Endothelial cell of umbilical vein (primary cell): ENCODE measurements at regions of chr4 and their contacts with region 1.

Region 1: GRCh38 chr4:26410385-26411293 is 79.6 kb downstream of the CCKAR start:
- DNase-seq: peak; percentile 67
- H3K4me3 ChIP-seq: no peak overlapping the region
- H3K27ac ChIP-seq: no peak overlapping the region
- H3K4me1 ChIP-seq: no peaks in the 10 kb centered on the region
- H3K27me3 ChIP-seq: no peaks in the 10 kb centered on the region
- CTCF ChIP-seq: peak; percentile 31 to 42
- POLR2A ChIP-seq: no peak

Region 2: DNA sequence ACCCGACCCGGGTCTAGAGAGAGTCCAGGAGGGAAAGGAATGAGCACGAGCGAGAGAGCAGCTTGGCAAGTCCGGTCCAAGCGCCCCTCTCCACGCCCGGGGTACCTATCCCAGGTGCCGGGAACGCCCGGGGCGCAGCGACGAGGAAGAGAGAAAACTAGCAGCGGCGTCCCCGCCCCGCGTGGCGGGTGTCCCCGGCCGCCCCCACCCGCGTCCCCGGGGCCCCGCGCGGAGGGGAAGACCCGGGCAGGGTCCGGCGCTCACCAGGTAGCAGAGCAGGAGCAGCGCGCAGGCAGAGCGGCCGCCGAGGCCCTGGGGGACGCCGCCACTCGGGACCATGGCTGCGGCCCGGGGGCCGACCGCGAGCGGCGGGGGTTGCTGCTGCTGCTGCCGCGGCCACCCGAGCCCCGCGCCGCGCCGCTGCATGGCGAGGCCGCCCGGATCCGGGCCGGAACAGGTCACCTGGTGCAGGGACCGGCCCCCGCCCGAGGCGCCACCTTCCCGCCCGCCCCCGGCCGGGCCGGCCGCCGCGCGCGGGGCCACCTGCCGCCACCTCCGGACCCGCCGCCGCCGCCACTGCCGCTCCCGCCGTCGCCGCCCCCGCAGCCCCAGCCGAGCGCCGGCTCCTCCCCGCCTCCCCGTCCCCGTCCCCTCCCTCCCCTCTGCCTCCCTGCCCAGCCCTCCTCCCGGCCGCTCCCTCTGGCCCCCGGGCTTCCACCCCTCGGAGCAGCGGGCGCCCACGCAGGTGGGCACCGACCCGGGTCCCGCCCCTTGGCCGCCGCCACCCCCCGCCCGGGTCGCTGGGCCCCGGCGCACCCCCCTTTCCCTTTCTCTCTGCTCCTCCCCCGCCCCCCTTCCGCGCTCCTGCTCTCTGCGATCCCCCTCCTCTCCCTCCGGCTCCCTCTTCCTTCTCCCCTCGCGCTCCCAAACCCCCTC is 548.0 kb before region 1 on chr4 and contains the start of gene SEL1L3:
- CTCF ChIA-PET with region 1: no interaction called
- POLR2A ChIA-PET with region 1: no interaction called
- dilution Hi-C with region 1: no loop called
- intact Hi-C with region 1: loop called (anchors 10 kb)
- DNase-seq: no peak
- H3K4me3 ChIP-seq: peak within 1 kb of the TSS; percentile 52 to 92 (median 80)
- H3K27ac ChIP-seq: peak within 1 kb of the TSS; percentile 74
- H3K4me1 ChIP-seq: peaks cover 38% of the 10 kb centered on the region
- H3K27me3 ChIP-seq: no peaks in the 10 kb centered on the region
- CTCF ChIP-seq: no peak
- POLR2A ChIP-seq: no peak
- total RNA-seq, gene SEL1L3: 91.1 and 122 TPM in 2 replicates

Region 3: DNA sequence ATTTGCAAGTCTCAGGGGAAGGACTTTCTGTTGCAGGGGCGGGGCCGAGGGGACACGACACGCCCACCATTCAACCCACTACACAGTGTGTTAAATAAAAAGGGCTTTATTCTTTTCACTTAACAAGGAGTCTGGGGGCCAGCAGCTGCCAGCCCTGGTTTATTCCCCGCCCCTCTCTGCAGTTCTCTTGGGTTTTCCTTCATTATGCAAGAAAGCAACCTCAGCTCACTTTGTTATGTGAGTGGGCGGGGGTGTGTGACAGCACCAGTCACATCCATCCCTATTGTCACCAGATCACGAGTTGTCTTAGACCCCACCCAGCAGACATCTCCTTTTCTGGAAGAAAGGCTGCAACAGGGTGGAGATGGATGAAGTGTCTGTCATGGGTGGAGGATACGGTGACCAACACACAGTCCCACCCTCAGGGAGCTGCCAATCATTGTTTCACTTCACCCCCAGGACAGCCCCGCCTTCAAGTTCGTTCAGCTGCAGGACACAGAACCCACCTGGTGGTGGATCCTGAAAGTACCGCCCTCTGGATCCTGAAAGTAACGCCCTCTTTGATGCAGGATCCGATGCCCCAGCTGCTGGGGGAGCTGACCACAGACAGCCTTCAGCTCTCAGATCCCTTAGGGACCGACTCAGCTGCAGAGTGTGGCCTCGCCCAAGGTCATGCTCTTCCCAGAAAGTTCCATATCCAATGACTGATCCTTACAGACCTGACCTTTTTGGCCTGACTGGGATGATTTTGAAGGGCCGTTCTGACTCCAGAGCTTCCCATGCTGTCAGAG is 417.0 kb before region 1 on chr4:
- CTCF ChIA-PET with region 1: interaction called, 40 read pairs
- POLR2A ChIA-PET with region 1: no interaction called
- dilution Hi-C with region 1: no loop called
- intact Hi-C with region 1: loop called (anchors 1 kb)
- DNase-seq: no peak
- H3K4me3 ChIP-seq: no peak overlapping the region
- H3K27ac ChIP-seq: no peak overlapping the region
- H3K4me1 ChIP-seq: no peaks in the 10 kb centered on the region
- H3K27me3 ChIP-seq: no peaks in the 10 kb centered on the region
- CTCF ChIP-seq: peak; percentile 12 to 23
- POLR2A ChIP-seq: no peak

Region 4: GRCh38 chr4:26081795-26082498 is 328.7 kb before region 1 on chr4:
- CTCF ChIA-PET with region 1: interaction called, 63 read pairs
- POLR2A ChIA-PET with region 1: no interaction called
- dilution Hi-C with region 1: no loop called
- intact Hi-C with region 1: loop called (anchors 1 kb)
- DNase-seq: peak; percentile 58
- H3K4me3 ChIP-seq: no peak overlapping the region
- H3K27ac ChIP-seq: no peak overlapping the region
- H3K4me1 ChIP-seq: no peaks in the 10 kb centered on the region
- H3K27me3 ChIP-seq: peaks cover 0 to 2% of the 10 kb centered on the region in 2 experiments
- CTCF ChIP-seq: peak; percentile 46 to 51
- POLR2A ChIP-seq: no peak

Region 5: GRCh38 chr4:26397086-26397485 is 13.6 kb before region 1 on chr4:
- CTCF ChIA-PET with region 1: interaction called, 20 read pairs
- POLR2A ChIA-PET with region 1: no interaction called
- dilution Hi-C with region 1: no loop called
- intact Hi-C with region 1: no loop called
- DNase-seq: no peak
- H3K4me3 ChIP-seq: no peak overlapping the region
- H3K27ac ChIP-seq: no peak overlapping the region
- H3K4me1 ChIP-seq: no peaks in the 10 kb centered on the region
- H3K27me3 ChIP-seq: no peaks in the 10 kb centered on the region
- CTCF ChIP-seq: no peak
- POLR2A ChIP-seq: no peak

Region 6: GRCh38 chr4:26746802-26747213 is 336.2 kb after region 1 on chr4:
- CTCF ChIA-PET with region 1: no interaction called
- POLR2A ChIA-PET with region 1: no interaction called
- dilution Hi-C with region 1: no loop called
- intact Hi-C with region 1: no loop called
- DNase-seq: no peak
- H3K4me3 ChIP-seq: no peak overlapping the region
- H3K27ac ChIP-seq: no peak overlapping the region
- H3K4me1 ChIP-seq: no peaks in the 10 kb centered on the region
- H3K27me3 ChIP-seq: no peaks in the 10 kb centered on the region
- CTCF ChIP-seq: no peak
- POLR2A ChIP-seq: no peak

Region 7: DNA sequence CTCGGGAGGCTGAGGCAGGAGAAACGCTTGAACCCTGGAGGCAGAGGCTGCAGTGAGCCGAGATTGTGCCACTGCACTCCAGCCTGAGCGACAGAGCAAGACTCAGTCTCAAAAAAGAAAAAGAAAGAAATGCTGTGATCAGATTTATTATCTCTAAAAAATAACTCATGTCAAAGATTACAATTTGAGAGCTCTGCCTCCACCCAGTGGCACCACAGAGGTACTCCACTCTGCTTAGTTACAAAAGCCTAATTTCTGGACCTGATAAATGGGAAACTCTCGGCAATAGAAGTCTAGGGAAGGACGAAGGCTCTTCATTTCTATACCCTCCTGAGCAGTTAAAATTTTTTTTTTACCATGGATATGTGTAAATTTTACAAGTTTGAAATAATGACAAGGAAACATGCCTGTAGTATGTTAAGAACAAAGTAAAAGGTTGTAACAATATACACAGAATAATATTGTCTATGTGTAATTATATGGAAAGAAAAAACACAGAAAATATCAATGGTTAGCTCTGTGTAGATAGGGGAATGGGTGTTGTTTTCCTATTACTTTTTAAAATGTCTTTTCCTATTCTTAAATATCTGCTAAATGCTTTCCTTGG is 599.8 kb after region 1 on chr4:
- CTCF ChIA-PET with region 1: interaction called, 8 read pairs
- POLR2A ChIA-PET with region 1: no interaction called
- dilution Hi-C with region 1: no loop called
- intact Hi-C with region 1: loop called (anchors 5 kb)
- DNase-seq: peak; percentile 77
- H3K4me3 ChIP-seq: no peak overlapping the region
- H3K27ac ChIP-seq: no peak overlapping the region
- H3K4me1 ChIP-seq: peaks cover 10% of the 10 kb centered on the region
- H3K27me3 ChIP-seq: no peaks in the 10 kb centered on the region
- CTCF ChIP-seq: peak; percentile 62 to 68
- POLR2A ChIP-seq: no peak